Heart right ventricle (tissue), 16 donors: ENCODE measurements at regions of chr18 and their contacts with region 1.

Region 1: GRCh38 chr18:56575819-56576663 is 62.4 kb downstream of the TXNL1 start:
- DNase-seq: peak in 1 of 2 donors; percentile 56
- ATAC-seq: peak; percentile 64 to 96 (median 85)
- H3K4me3 ChIP-seq: peak overlapping the region in 2 of 10 donors; percentile 1 to 22
- H3K27ac ChIP-seq: peak overlapping the region; percentile 48 to 90 (median 70)
- H3K4me1 ChIP-seq: peaks cover 10 to 37% (median 33%) of the 10 kb centered on the region in 9 donors
- H3K27me3 ChIP-seq: no peaks in the 10 kb centered on the region
- CTCF ChIP-seq: peak; percentile 53 to 86 (median 71)

Region 2: GRCh38 chr18:55110436-55110835 is 1465.6 kb before region 1 on chr18:
- intact Hi-C with region 1: loop called in 1 of 10 experiments (anchors 5 kb)
- DNase-seq: peak; percentile 13 to 58
- ATAC-seq: peak; percentile 86 to 95 (median 93)
- H3K4me3 ChIP-seq: no peak overlapping the region
- H3K27ac ChIP-seq: peak overlapping the region; percentile 32 to 83 (median 71)
- H3K4me1 ChIP-seq: peaks cover 0 to 41% (median 11%) of the 10 kb centered on the region in 9 donors
- H3K27me3 ChIP-seq: no peaks in the 10 kb centered on the region
- CTCF ChIP-seq: no peak

Region 3: GRCh38 chr18:55322178-55322735 is 1253.8 kb before region 1 on chr18:
- intact Hi-C with region 1: loop called in 2 of 10 experiments (anchors 10 kb)
- DNase-seq: peak; percentile 84 to 91
- ATAC-seq: peak; percentile 80 to 94 (median 88)
- H3K4me3 ChIP-seq: peak overlapping the region; percentile 29 to 79 (median 64)
- H3K27ac ChIP-seq: peak overlapping the region; percentile 87 to 98 (median 94)
- H3K4me1 ChIP-seq: peaks cover 2 to 52% (median 37%) of the 10 kb centered on the region in 9 donors
- H3K27me3 ChIP-seq: no peaks in the 10 kb centered on the region
- CTCF ChIP-seq: peak in 6 of 9 donors; percentile 13 to 52 (median 34)

Region 4: GRCh38 chr18:55415258-55415871 is 1160.7 kb before region 1 on chr18:
- intact Hi-C with region 1: loop called (anchors 1 to 10 kb)
- DNase-seq: peak; percentile 88 to 91
- ATAC-seq: peak; percentile 87 to 93 (median 90)
- H3K4me3 ChIP-seq: no peak overlapping the region
- H3K27ac ChIP-seq: peak overlapping the region in 5 of 10 donors; percentile 14 to 91 (median 54)
- H3K4me1 ChIP-seq: peaks cover 0 to 78% (median 56%) of the 10 kb centered on the region in 9 donors
- H3K27me3 ChIP-seq: no peaks in the 10 kb centered on the region
- CTCF ChIP-seq: peak; percentile 82 to 98 (median 92)

Region 5: DNA sequence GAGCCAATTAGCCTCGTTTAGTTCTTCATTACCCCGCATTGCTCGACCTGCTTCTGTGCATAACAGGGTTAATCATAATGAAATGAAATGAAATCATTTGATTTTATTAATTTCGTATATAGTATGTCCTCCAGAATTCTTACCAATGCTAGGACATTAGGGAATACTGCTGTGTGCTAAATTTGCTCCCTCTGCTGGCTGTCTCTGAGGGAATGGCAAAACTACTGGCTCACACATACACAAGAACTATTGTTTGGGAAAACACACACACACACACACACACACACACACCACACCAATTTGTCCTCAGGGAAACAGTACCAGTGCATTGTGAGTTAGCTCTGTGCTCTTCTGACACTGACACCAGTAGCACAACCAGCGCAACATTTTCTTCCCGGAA is 714.8 kb before region 1 on chr18:
- intact Hi-C with region 1: loop called in 3 of 10 experiments (anchors 10 kb)
- DNase-seq: no peak
- ATAC-seq: peak in 2 of 8 donors; percentile 33 to 51
- H3K4me3 ChIP-seq: no peak overlapping the region
- H3K27ac ChIP-seq: no peak overlapping the region
- H3K4me1 ChIP-seq: peaks cover 0 to 30% (median 14%) of the 10 kb centered on the region in 9 donors
- H3K27me3 ChIP-seq: no peaks in the 10 kb centered on the region
- CTCF ChIP-seq: peak in 7 of 9 donors; percentile 38 to 58 (median 45)

Region 6: DNA sequence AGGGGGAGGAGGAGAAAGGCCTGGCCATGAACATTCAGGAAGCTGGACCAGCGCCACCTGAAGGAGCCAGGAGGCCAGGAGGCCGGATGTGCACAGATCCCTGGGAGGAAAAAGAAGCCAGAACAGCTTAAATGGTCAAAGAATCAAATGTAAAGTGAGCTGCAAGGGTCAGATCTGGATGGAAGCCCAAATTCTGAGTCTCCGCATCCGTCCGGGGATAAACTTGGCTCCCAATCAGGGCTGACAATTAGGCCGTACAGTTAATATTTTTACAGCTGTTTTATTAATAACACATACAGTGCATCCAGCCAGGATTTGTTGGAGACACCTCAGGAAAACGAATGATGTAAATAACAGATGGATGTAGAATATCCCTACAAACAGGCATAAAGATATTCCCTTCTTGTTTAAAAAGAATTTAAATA is 492.9 kb before region 1 on chr18:
- intact Hi-C with region 1: loop called in 1 of 10 experiments (anchors 5 kb)
- DNase-seq: peak; percentile 70 to 92
- ATAC-seq: peak; percentile 75 to 94 (median 89)
- H3K4me3 ChIP-seq: no peak overlapping the region
- H3K27ac ChIP-seq: peak overlapping the region; percentile 10 to 78 (median 60)
- H3K4me1 ChIP-seq: peaks cover 8 to 41% (median 32%) of the 10 kb centered on the region in 9 donors
- H3K27me3 ChIP-seq: no peaks in the 10 kb centered on the region
- CTCF ChIP-seq: peak in 6 of 9 donors; percentile 19 to 54 (median 34)